Activated T-helper 1 cell treated with anti-CD3 and anti-CD28 coated beads, Interleukin-12 subunit alpha, Interleukin-12 subunit beta, Interleukin-2, Interleukin-4 antibody, amounts not matched to agents 30 ng/mL and 10 ng/mL and 1 ng/mL, durations not matched to agents 14 hours and 24 hours and 36 hours (primary cell): ENCODE measurements at regions of chr16 and their contacts with region 1.

Region 1: GRCh38 chr16:56203052-56203451 is 11.8 kb downstream of the GNAO1 start:
- DNase-seq: peak; percentile 37
- H3K4me3 Mint-ChIP-seq: no peak overlapping the region
- H3K27ac Mint-ChIP-seq: no peak overlapping the region
- H3K4me1 Mint-ChIP-seq: no peaks in the 10 kb centered on the region
- H3K27me3 Mint-ChIP-seq: peaks cover 2% of the 10 kb centered on the region

Region 2: DNA sequence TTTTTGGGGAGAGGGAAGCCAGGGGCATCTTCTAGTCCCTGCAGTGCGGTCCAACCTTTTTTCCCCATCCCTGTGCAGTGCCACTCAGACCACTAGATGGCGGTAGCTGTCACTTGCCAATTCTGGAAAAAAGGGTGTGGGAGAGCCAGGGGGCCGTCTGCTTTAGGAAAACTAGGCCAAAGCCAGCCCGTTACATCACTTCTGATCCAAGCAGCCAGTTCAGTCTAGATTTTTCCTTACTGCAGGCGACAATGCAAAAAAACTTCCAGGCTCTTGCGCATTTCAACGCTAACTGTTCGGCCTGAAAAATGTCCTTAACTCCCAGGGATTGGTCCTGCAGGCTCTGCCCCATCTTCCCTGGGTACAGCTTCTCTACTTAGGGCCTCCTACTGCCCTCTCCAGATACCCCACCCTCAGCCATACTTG is 258.7 kb before region 1 on chr16:
- intact Hi-C with region 1: loop called (anchors 1 kb)
- DNase-seq: peak; percentile 2
- H3K4me3 Mint-ChIP-seq: no peak overlapping the region
- H3K27ac Mint-ChIP-seq: no peak overlapping the region
- H3K4me1 Mint-ChIP-seq: no peaks in the 10 kb centered on the region
- H3K27me3 Mint-ChIP-seq: peaks cover 21% of the 10 kb centered on the region

Region 3: DNA sequence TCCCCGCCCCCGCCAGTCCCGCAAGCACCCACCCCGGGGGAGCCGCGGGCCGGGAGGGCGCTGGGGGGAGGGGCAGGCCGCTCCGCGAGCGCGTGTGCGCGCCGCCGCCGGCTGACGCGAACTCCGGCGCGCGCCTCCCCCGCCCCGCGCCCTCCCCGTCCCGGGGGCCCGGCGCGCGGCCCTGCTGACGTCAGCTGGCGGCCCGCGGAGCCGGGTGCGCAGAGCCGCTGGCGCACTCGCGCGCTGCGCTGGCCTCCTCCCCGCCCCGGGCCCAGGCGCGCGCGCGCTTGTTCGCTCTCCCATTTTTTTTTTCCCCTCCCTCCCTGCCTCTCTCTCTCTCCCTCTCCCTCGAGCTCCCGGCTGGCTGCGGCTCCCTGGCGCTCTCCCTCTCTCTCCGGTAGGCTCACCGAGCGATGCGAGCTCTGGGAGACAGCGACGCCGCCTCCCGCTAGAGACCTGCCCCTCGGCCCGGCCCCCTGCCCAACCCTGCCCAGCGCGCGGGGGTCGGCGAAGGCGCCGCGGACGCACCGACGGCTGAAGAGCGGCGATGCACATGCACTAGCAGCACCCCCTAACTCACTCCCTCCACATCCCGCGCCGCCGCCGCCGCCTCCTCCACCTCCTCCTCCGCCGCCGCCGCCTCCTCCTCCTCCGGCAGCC is 11.8 kb before region 1 on chr16 and contains the start of gene GNAO1:
- intact Hi-C with region 1: loop called (anchors 1 kb)
- DNase-seq: peak; percentile 37
- H3K4me3 Mint-ChIP-seq: peak within 1 kb of the TSS; percentile 72
- H3K27ac Mint-ChIP-seq: peak within 1 kb of the TSS; percentile 44
- H3K4me1 Mint-ChIP-seq: peaks cover 31% of the 10 kb centered on the region
- H3K27me3 Mint-ChIP-seq: peaks cover 78% of the 10 kb centered on the region
- total RNA-seq, gene GNAO1: 1.7 and 2.0 TPM in 2 replicates

Region 4: GRCh38 chr16:56317998-56318826 is 115.2 kb after region 1 on chr16:
- intact Hi-C with region 1: loop called (anchors 2 kb)
- DNase-seq: peak; percentile 62
- H3K4me3 Mint-ChIP-seq: no peak overlapping the region
- H3K27ac Mint-ChIP-seq: no peak overlapping the region
- H3K4me1 Mint-ChIP-seq: no peaks in the 10 kb centered on the region
- H3K27me3 Mint-ChIP-seq: peaks cover 11% of the 10 kb centered on the region

Region 5: DNA sequence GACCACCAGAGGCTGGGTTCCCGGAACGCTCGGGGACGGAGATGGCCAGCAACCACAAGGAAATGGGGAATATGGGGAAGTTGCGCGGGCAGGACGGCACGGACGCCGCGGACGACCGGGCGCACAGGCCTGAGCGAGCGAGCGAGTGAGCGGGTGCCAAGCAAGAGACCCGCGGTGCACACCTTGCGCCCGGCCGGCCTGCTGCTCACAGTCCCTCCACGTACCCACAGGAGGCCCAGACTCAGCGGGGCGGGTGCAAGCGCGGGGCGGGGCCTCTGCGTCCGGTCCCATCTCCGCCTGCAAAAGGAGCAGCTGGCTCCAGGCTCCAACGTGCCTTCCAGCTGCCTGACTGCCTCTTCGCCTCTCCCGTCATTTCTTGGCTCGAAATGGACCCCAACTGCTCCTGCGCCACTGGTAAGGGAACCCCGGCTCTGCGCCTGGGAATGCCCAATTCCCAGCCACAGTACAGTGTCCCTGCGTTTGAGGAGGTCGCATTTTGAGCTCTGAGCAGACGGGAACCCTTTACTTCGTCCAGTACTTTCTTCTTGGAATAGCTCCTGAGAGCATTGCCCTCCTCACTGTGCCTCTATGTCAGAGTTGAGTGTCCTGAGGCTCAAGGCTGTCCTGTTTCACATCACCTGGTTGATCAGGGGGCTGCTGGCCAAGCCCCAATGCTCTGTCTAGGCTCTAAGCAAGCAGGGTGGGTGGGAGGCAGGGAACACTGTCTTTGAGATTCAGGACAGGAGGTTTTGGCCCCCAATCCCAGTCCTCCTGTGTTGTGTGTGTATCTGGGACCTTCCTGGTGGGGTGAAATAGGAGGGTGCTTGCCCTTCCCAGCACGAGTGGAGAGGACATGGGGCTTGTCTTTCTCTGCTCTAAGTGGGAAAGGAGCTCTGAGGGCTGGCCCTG is 414.4 kb after region 1 on chr16:
- intact Hi-C with region 1: loop called (anchors 2 kb)
- DNase-seq: peak; percentile 65
- H3K4me3 Mint-ChIP-seq: peak overlapping the region; percentile 82
- H3K27ac Mint-ChIP-seq: peak overlapping the region; percentile 63
- H3K4me1 Mint-ChIP-seq: peaks cover 39% of the 10 kb centered on the region
- H3K27me3 Mint-ChIP-seq: peaks cover 6% of the 10 kb centered on the region